ENCODE measurements at regions of chr14 and their contacts with region 1.

Region 1: GRCh38 chr14:103576371-103577024 is 13.7 kb downstream of the COA8 start:
- DNase-seq: no peak
- ATAC-seq: no peak
- H3K4me3 ChIP-seq: no peak overlapping the region
- H3K4me3 Mint-ChIP-seq: no peak overlapping the region
- H3K27ac ChIP-seq: no peak overlapping the region
- H3K27ac Mint-ChIP-seq: no peak overlapping the region
- H3K4me1 ChIP-seq: no peaks in the 10 kb centered on the region
- H3K4me1 Mint-ChIP-seq: no peaks in the 10 kb centered on the region
- H3K27me3 ChIP-seq: no peaks in the 10 kb centered on the region
- H3K27me3 Mint-ChIP-seq: no peaks in the 10 kb centered on the region
- CTCF ChIP-seq: no peak

Region 2: DNA sequence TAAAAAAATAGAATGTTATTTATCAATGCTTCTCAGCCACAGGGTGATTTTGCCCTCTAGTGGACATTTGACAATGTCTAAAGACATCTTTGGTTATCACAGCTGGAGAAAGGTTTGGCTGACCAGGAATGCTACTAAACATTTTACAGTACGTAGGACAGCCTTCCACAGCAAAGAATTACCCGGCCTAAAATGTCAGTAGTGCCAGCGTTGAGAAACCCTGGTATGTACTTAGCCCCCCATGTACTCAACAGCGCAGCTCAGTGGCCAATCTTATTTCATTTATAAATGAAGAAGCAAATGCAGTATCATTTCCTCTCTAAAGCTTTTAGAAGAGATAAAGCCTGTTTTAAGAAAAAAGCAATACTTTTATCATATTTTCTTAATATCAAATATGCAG is 185.4 kb before region 1 on chr14:
- CTCF ChIA-PET with region 1: no interaction called
- POLR2A ChIA-PET with region 1: no interaction called
- intact Hi-C with region 1: no loop called
- DNase-seq: peak; percentile 4 to 78 (median 54)
- ATAC-seq: peak; percentile 74
- H3K4me3 ChIP-seq: no peak overlapping the region
- H3K4me3 Mint-ChIP-seq: no peak overlapping the region
- H3K27ac ChIP-seq: peak overlapping the region in 1 of 2 experiments; percentile 3
- H3K27ac Mint-ChIP-seq: peak overlapping the region; percentile 10
- H3K4me1 ChIP-seq: peaks cover 57% of the 10 kb centered on the region
- H3K4me1 Mint-ChIP-seq: peaks cover 66% of the 10 kb centered on the region
- H3K27me3 ChIP-seq: no peaks in the 10 kb centered on the region
- H3K27me3 Mint-ChIP-seq: no peaks in the 10 kb centered on the region
- CTCF ChIP-seq: peak; percentile 83

Region 3: DNA sequence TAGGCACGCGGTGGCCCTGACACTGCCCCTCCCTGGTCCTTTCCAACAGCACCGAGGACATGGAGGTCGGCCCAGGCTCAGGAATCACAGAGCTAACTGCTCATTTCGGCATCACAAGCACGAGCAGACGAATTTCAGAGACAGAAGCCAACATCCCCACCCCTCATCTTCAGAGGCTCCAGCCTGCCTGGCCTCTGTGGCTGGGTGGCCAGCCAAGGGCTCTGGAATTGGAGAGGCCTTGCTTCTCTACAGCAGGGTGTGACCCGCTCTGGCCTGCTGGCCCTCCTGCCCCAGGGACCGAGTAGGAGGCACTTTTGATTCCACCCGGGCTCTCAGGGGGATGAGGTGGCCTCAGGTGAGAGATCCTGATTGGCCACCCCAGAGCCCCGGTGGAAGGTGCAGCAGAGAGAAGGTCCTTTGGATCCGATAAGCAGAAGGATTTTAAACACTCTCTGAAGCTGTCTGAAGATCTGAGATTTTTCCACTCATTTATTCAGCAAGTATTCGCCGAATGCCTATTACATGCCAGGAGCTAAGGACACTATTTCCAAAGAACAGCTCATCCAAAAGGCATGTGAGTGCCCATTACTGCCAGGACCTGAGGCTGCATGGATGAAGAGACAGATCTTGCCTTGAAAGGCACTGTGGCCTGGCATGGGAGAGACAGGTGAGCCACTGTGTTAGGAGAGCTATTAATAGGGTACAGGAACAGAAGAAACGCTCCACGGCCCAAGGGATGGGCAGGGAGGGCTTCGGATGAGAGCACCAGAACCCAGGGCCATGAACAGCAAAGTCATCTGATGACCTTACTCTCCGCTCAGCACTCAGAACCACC is 24.3 kb before region 1 on chr14:
- CTCF ChIA-PET with region 1: no interaction called
- POLR2A ChIA-PET with region 1: no interaction called
- intact Hi-C with region 1: no loop called
- DNase-seq: no peak
- ATAC-seq: no peak
- H3K4me3 ChIP-seq: no peak overlapping the region
- H3K4me3 Mint-ChIP-seq: no peak overlapping the region
- H3K27ac ChIP-seq: no peak overlapping the region
- H3K27ac Mint-ChIP-seq: peak overlapping the region; percentile 45
- H3K4me1 ChIP-seq: no peaks in the 10 kb centered on the region
- H3K4me1 Mint-ChIP-seq: peaks cover 13% of the 10 kb centered on the region
- H3K27me3 ChIP-seq: no peaks in the 10 kb centered on the region
- H3K27me3 Mint-ChIP-seq: no peaks in the 10 kb centered on the region
- CTCF ChIP-seq: no peak

Region 4: GRCh38 chr14:103594265-103594664 is 17.8 kb after region 1 on chr14:
- CTCF ChIA-PET with region 1: no interaction called
- POLR2A ChIA-PET with region 1: no interaction called
- intact Hi-C with region 1: loop called in 1 of 2 experiments (anchors 1 kb)
- DNase-seq: no peak
- ATAC-seq: no peak
- H3K4me3 ChIP-seq: no peak overlapping the region
- H3K4me3 Mint-ChIP-seq: no peak overlapping the region
- H3K27ac ChIP-seq: no peak overlapping the region
- H3K27ac Mint-ChIP-seq: no peak overlapping the region
- H3K4me1 ChIP-seq: no peaks in the 10 kb centered on the region
- H3K4me1 Mint-ChIP-seq: peaks cover 3% of the 10 kb centered on the region
- H3K27me3 ChIP-seq: no peaks in the 10 kb centered on the region
- H3K27me3 Mint-ChIP-seq: no peaks in the 10 kb centered on the region
- CTCF ChIP-seq: no peak

Region 5: DNA sequence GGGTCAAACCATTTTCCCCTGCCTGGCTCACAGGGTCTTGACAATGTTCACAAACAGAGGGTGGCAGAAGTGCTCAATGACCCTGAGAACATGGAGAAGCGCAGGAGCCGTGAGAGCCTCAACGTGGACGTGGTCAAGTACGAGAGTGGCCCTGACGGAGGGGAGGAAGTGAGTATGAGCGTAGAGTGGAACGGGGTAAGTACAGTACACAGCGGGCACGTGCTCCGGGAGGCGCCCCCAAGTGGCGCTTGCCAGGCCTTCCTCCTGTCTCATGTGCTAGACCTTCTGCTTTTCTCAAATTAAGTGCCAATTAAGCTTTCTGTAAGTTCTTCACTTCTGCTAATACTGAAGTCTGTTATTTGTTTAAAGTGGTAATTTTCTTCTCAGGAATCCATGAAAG is 102.9 kb after region 1 on chr14:
- CTCF ChIA-PET with region 1: interaction called, 7 read pairs
- POLR2A ChIA-PET with region 1: no interaction called
- intact Hi-C with region 1: loop called (anchors 1 kb)
- DNase-seq: peak in 7 of 9 experiments; percentile 20 to 59 (median 49)
- ATAC-seq: peak; percentile 91
- H3K4me3 ChIP-seq: no peak overlapping the region
- H3K4me3 Mint-ChIP-seq: no peak overlapping the region
- H3K27ac ChIP-seq: peak overlapping the region in 1 of 2 experiments; percentile 4
- H3K27ac Mint-ChIP-seq: no peak overlapping the region
- H3K4me1 ChIP-seq: no peaks in the 10 kb centered on the region
- H3K4me1 Mint-ChIP-seq: peaks cover 5% of the 10 kb centered on the region
- H3K27me3 ChIP-seq: no peaks in the 10 kb centered on the region
- H3K27me3 Mint-ChIP-seq: no peaks in the 10 kb centered on the region
- CTCF ChIP-seq: peak; percentile 49

Region 6: GRCh38 chr14:103788086-103788485 is 211.6 kb after region 1 on chr14:
- CTCF ChIA-PET with region 1: no interaction called
- POLR2A ChIA-PET with region 1: no interaction called
- intact Hi-C with region 1: loop called in 1 of 2 experiments (anchors 5 kb)
- DNase-seq: no peak
- ATAC-seq: no peak
- H3K4me3 ChIP-seq: no peak overlapping the region
- H3K4me3 Mint-ChIP-seq: no peak overlapping the region
- H3K27ac ChIP-seq: no peak overlapping the region
- H3K27ac Mint-ChIP-seq: no peak overlapping the region
- H3K4me1 ChIP-seq: no peaks in the 10 kb centered on the region
- H3K4me1 Mint-ChIP-seq: no peaks in the 10 kb centered on the region
- H3K27me3 ChIP-seq: no peaks in the 10 kb centered on the region
- H3K27me3 Mint-ChIP-seq: no peaks in the 10 kb centered on the region
- CTCF ChIP-seq: no peak

Measured in CD8-positive, alpha-beta T cell (primary cell).